ENCODE measurements at regions of chr6 and their contacts with region 1.

Region 1: GRCh38 chr6:36302227-36302976 is 32.5 kb downstream of the PNPLA1 start:
- H3K4me3 ChIP-seq: no peak overlapping the region
- H3K27ac ChIP-seq: no peak overlapping the region
- H3K4me1 ChIP-seq: no peaks in the 10 kb centered on the region
- CTCF ChIP-seq: peak; percentile 89

Region 2: DNA sequence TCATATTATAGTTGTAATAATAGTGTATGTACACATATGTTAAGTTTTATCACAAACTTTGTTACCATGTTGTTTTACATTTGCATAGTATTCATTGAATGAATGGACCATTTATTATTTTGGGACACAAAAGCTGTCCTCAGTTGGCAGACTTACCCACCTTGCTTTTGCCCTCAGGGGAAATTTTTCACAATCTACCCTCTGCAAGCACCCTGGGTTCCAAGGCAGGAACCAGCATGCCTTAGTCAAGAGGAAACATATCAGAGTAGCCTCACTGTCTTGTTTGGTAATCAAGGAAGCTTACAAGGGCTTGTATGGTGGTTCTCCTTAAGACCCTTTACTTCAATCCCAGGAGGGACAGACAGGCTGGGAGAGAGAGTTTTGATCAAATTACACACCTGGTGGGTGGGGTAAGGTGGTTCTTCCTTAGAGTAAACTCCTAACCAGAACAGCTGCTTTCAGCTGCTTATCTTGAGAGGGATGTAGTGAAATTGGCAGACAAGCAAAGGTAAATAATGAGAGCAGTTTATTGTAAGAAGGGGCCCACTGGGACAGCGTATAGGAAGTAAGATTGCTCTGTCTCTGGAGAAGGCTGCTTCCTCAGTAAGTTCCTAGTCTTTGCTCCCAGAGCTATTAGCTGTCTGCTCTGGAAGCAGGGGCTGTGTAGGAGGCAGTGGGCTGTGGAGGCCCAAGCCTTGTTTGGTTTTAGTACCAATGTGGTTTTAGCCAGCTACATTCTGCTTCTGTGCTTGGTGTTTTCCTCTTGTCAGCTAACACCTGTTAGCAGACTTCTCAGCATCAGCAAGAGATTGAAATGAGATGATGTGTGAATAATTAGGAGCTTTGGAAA is 74.8 kb before region 1 on chr6:
- CTCF ChIA-PET with region 1: interaction called, 11 read pairs
- POLR2A ChIA-PET with region 1: no interaction called
- H3K4me3 ChIP-seq: no peak overlapping the region
- H3K27ac ChIP-seq: peak overlapping the region; percentile 47
- H3K4me1 ChIP-seq: peaks cover 33% of the 10 kb centered on the region
- CTCF ChIP-seq: no peak

Region 3: DNA sequence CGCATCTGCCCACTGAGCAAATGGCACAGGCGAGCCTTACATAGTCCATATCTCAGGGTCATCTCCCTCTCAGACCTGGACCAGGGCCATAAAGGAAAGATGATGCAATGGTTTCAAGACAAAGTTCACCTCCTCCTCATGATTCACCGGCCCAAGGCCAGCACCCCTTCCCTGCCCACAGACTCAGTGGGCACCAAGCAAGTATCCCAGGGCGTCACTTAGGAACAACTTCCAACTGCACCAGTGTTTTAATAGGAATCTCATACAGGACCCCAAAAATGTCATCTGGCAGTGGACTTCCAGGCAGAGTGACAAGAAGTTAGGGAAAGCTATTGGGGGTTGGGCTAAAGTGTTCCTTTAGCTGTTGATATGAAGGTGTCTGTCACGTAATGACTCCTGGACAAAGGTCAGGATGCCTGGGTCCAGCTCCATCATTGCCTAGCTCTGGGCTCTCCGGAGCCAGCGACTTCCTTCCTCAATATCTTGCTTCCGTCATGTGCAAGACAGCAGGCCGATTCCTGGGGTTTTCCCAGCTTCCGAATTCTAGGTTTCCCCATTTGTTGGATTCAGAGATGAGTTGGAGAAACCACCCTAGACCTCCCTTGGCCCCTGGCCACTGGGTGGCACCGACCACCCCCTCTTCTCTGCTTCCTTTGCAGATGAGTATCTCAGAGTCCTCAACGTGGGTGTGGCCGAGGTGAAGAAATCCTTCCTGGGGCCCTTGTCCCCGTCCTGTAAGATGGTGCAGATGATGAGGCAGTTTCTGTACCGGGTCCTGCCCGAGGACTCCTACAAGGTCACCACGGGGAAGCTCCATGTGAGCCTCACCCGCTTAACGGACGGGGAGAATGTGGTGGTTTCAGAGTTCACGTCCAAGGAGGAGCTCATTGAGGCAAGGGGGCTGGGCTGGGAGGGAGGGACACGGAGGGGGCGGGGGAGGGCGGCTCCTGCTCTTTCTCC is 11.5 kb before region 1 on chr6:
- CTCF ChIA-PET with region 1: interaction called, 142 read pairs
- POLR2A ChIA-PET with region 1: no interaction called
- H3K4me3 ChIP-seq: no peak overlapping the region
- H3K27ac ChIP-seq: no peak overlapping the region
- H3K4me1 ChIP-seq: peaks cover 8% of the 10 kb centered on the region
- CTCF ChIP-seq: no peak

Region 4: GRCh38 chr6:36333931-36334725 is 31.7 kb after region 1 on chr6:
- CTCF ChIA-PET with region 1: interaction called, 57 read pairs
- POLR2A ChIA-PET with region 1: no interaction called
- H3K4me3 ChIP-seq: no peak overlapping the region
- H3K27ac ChIP-seq: no peak overlapping the region
- H3K4me1 ChIP-seq: peaks cover 3% of the 10 kb centered on the region
- CTCF ChIP-seq: no peak

Region 5: DNA sequence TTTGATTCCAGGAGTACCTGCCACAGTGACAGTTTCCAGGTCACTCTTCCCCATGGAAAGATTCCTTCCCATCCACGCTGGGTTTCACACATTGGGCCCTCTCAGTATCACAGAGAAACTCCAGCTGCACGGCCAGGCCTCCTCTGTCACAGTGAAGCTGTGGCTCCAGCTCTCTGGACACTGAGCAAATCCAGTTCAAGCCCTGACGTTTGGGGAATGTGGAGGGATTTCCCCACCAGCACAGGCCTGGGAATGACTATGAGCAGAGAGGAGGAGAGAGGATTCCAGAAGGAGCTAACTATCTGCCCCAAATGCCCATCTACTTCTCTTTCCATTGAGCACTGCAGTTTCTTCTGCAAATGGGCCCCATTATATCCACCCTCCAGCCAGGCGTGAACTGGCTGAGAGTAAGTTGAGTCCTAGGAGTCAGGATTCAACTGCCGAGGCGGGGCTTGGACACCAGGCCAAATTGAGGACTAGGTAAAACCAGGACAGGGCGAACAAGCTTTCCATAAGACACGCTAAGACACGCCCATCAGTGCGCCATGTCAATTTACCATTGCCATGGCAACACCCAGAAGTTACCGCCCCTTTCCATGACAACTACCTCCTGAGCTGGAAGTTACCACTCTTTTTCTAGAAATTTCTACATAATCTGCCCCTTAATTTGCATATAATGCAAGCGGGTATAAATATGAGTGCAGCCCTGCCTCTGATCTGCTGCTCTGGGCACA is 43.4 kb after region 1 on chr6:
- CTCF ChIA-PET with region 1: interaction called, 57 read pairs
- POLR2A ChIA-PET with region 1: interaction called, 3 read pairs
- H3K4me3 ChIP-seq: no peak overlapping the region
- H3K27ac ChIP-seq: no peak overlapping the region
- H3K4me1 ChIP-seq: peaks cover 3% of the 10 kb centered on the region; the same call in 1 of the 2 replicates
- CTCF ChIP-seq: no peak

Region 6: GRCh38 chr6:36360241-36361054 is 58.0 kb after region 1 on chr6:
- CTCF ChIA-PET with region 1: interaction called, 172 read pairs
- POLR2A ChIA-PET with region 1: interaction called, 4 read pairs
- H3K4me3 ChIP-seq: no peak overlapping the region
- H3K27ac ChIP-seq: no peak overlapping the region
- H3K4me1 ChIP-seq: no peaks in the 10 kb centered on the region
- CTCF ChIP-seq: peak; percentile 79

Region 7: DNA sequence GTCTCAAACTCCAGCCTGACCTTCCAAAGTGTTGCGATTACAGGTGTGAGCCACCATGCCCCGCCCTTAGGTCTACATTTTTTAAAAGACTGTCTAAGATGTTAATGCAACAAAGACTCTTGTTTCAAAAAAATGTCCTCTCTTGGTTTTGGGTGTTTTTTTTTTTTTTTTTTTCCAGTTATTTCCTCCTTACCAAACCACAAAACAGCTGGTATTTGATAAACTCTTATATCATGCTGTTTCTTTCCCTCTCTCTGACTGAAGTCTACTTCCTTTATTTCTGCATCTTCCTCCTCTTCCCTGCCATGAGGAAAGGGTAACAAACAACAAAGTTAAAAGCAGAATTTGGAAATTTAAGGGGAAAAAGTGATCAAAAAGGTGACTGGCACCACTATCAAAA is 223.7 kb after region 1 on chr6:
- CTCF ChIA-PET with region 1: no interaction called
- POLR2A ChIA-PET with region 1: no interaction called
- H3K4me3 ChIP-seq: no peak overlapping the region
- H3K27ac ChIP-seq: no peak overlapping the region
- H3K4me1 ChIP-seq: no peaks in the 10 kb centered on the region
- CTCF ChIP-seq: no peak

Region 8: GRCh38 chr6:36682328-36683144 is 380.1 kb after region 1 on chr6:
- CTCF ChIA-PET with region 1: no interaction called
- POLR2A ChIA-PET with region 1: no interaction called
- H3K4me3 ChIP-seq: no peak overlapping the region; the same call in 1 of the 2 replicates
- H3K27ac ChIP-seq: peak overlapping the region; percentile 57
- H3K4me1 ChIP-seq: peaks cover 15% of the 10 kb centered on the region
- CTCF ChIP-seq: no peak

Region 9: DNA sequence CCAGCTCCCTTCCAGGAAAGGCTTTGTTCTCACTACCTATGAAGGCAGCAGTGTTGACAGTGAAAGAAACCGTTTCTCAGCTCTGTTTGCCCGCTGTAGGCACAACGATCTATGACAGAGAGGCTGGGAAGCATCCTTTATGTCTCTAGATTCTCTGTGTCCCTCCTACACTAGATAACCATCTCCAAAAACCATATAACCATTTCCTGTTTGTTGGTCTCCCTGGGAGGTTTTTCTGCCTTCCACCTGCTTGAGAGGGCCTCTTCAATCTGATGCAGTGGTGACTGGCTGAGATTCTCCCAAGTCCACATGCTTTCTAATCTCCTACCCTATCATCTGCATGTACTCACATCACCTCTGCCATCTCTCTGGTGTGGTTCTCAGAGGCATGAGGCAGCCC is 987.5 kb after region 1 on chr6:
- CTCF ChIA-PET with region 1: no interaction called
- POLR2A ChIA-PET with region 1: no interaction called
- H3K4me3 ChIP-seq: no peak overlapping the region
- H3K27ac ChIP-seq: no peak overlapping the region
- H3K4me1 ChIP-seq: no peaks in the 10 kb centered on the region
- CTCF ChIP-seq: no peak